CD14-positive monocyte (primary cell): ENCODE measurements at regions of chr9 and their contacts with region 1.

Region 1: GRCh38 chr9:79565245-79565644 is 6.5 kb upstream of the TLE4 start:
- DNase-seq: no peak
- H3K4me3 ChIP-seq: no peak overlapping the region
- H3K4me3 Mint-ChIP-seq: no peak overlapping the region
- H3K27ac ChIP-seq: no peak overlapping the region
- H3K27ac Mint-ChIP-seq: no peak overlapping the region
- H3K4me1 ChIP-seq: peaks cover 27 to 28% of the 10 kb centered on the region in 2 donors
- H3K4me1 Mint-ChIP-seq: peaks cover 32% of the 10 kb centered on the region
- H3K27me3 ChIP-seq: peaks cover 0 to 2% of the 10 kb centered on the region in 2 donors
- H3K27me3 Mint-ChIP-seq: peaks cover 0 to 10% (median 9%) of the 10 kb centered on the region in 3 donors
- CTCF ChIP-seq: no peak

Region 2: DNA sequence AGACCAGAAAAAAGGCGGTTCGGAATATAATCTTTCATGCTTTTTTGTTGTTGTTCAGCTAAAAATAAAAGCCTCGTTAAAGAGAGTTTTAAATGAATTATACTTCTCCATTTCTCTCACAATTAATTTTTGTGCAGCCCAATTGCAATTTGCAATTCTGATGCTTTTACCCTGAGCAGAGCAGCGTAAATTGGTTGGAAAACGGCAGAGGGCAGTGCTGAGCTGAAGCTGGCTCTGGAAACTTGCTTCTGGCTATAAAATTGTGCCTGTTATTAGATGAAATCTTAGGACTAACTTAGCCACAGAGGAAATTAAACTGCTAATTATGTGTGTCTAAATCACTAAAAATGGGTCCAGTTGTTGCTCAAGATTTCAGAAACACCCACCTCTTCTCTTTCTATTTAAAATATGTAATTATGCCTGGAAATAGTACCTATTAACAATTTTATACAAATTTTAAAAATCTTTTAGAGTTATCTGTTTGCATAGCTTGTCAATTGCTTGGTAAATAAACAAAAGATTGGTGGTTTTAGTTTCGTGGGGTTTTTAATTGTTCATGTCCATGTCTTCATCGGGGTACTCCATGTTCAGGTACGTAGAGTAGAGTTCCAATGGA is 435.3 kb before region 1 on chr9:
- intact Hi-C with region 1: loop called in 1 of 2 experiments (anchors 10 kb)
- DNase-seq: peak; percentile 12 to 28 (median 16)
- H3K4me3 ChIP-seq: no peak overlapping the region
- H3K4me3 Mint-ChIP-seq: no peak overlapping the region
- H3K27ac ChIP-seq: no peak overlapping the region
- H3K27ac Mint-ChIP-seq: no peak overlapping the region
- H3K4me1 ChIP-seq: no peaks in the 10 kb centered on the region
- H3K4me1 Mint-ChIP-seq: peaks cover 2% of the 10 kb centered on the region
- H3K27me3 ChIP-seq: no peaks in the 10 kb centered on the region
- H3K27me3 Mint-ChIP-seq: peaks cover 0 to 1% (median 0%) of the 10 kb centered on the region in 3 donors
- CTCF ChIP-seq: peak; percentile 80

Region 3: GRCh38 chr9:79524266-79524665 is 41.0 kb before region 1 on chr9:
- intact Hi-C with region 1: no loop called
- DNase-seq: no peak
- H3K4me3 ChIP-seq: no peak overlapping the region
- H3K4me3 Mint-ChIP-seq: no peak overlapping the region
- H3K27ac ChIP-seq: no peak overlapping the region
- H3K27ac Mint-ChIP-seq: no peak overlapping the region
- H3K4me1 ChIP-seq: no peaks in the 10 kb centered on the region
- H3K4me1 Mint-ChIP-seq: no peaks in the 10 kb centered on the region
- H3K27me3 ChIP-seq: no peaks in the 10 kb centered on the region
- H3K27me3 Mint-ChIP-seq: peaks cover 0 to 2% (median 2%) of the 10 kb centered on the region in 3 donors
- CTCF ChIP-seq: no peak